CD14-positive monocyte (primary cell): ENCODE measurements at regions of chr3 and their contacts with region 1.

Region 1: DNA sequence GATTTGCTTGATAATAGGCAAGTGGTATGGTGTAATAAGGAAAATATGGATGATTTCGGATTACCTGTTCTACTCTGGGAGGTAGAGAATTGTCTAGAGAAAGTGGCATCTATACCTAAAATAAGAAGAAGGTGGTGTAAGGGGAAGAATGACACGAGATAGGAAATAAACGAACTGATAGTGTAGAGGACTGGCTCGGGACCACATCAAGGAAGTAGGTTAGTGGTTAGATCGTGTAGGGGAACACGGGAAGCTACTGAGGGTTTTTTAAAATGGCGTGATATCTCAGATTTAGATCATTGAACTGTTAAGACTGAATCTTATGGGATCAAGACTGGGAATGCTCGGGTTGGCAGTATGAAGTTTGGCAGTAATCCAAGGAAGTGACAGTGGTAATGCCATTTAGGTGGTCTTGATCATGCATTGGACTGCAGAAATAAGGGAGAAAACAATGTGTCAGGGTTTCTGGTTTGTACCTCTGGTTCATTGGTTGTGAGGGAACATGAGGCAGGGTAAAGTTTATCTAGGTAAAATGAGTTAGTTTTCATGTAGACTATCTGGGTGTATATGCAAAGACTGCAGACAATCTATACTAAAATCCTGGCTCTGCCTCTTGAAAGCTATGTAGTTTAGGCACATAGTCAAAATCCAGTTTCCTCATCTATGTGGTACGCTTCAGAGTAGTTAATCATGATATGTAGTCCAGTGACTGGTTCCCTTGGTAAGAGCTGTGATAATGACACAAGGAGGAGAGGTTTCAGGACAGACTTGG is 7.4 kb downstream of the RPL14 start:
- DNase-seq: no peak
- H3K4me3 ChIP-seq: no peak overlapping the region
- H3K4me3 Mint-ChIP-seq: no peak overlapping the region
- H3K27ac ChIP-seq: no peak overlapping the region
- H3K27ac Mint-ChIP-seq: peak overlapping the region in 2 of 7 donors; percentile 39 to 43
- H3K4me1 ChIP-seq: no peaks in the 10 kb centered on the region
- H3K4me1 Mint-ChIP-seq: peaks cover 5% of the 10 kb centered on the region
- H3K27me3 ChIP-seq: no peaks in the 10 kb centered on the region
- H3K27me3 Mint-ChIP-seq: peaks cover 0 to 2% (median 0%) of the 10 kb centered on the region in 3 donors
- CTCF ChIP-seq: no peak

Region 2: GRCh38 chr3:41234823-41235721 is 770.5 kb after region 1 on chr3:
- intact Hi-C with region 1: loop called in 1 of 2 experiments (anchors 5 kb)
- DNase-seq: no peak
- H3K4me3 ChIP-seq: no peak overlapping the region
- H3K4me3 Mint-ChIP-seq: no peak overlapping the region
- H3K27ac ChIP-seq: no peak overlapping the region
- H3K27ac Mint-ChIP-seq: peak overlapping the region in 1 of 7 donors; percentile 52
- H3K4me1 ChIP-seq: no peaks in the 10 kb centered on the region
- H3K4me1 Mint-ChIP-seq: no peaks in the 10 kb centered on the region
- H3K27me3 ChIP-seq: no peaks in the 10 kb centered on the region
- H3K27me3 Mint-ChIP-seq: no peaks in the 10 kb centered on the region
- CTCF ChIP-seq: no peak